ENCODE measurements at regions of chr5 and their contacts with region 1.

Region 1: DNA sequence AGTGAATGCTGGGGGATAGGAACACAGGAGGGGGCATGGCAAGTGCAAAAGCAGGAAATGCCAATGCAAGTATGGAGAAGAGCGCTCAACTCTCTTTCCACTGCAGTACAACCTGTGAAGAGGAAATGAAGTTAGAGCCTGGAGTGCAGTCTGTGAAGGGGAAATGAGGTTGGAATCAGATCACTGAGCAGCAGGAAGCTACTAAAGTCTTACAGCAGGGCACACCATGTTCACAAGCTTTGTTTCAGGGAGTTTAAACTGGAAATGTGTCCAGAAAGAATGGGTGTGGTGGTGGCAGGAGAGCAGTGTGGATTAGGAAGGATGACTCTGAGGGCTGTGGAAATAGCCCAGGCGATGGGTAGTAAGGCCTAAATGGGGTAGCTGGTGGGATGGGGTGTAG is 15.4 kb downstream of the ARHGEF37 start:
- DNase-seq: peak; percentile 75
- H3K4me3 ChIP-seq: no peak overlapping the region
- H3K27ac ChIP-seq: peak overlapping the region; percentile 46
- H3K4me1 ChIP-seq: peaks cover 7% of the 10 kb centered on the region
- H3K27me3 ChIP-seq: peaks cover 0 to 1% of the 10 kb centered on the region in 2 experiments
- CTCF ChIP-seq: no peak
- POLR2A ChIP-seq: no peak

Region 2: DNA sequence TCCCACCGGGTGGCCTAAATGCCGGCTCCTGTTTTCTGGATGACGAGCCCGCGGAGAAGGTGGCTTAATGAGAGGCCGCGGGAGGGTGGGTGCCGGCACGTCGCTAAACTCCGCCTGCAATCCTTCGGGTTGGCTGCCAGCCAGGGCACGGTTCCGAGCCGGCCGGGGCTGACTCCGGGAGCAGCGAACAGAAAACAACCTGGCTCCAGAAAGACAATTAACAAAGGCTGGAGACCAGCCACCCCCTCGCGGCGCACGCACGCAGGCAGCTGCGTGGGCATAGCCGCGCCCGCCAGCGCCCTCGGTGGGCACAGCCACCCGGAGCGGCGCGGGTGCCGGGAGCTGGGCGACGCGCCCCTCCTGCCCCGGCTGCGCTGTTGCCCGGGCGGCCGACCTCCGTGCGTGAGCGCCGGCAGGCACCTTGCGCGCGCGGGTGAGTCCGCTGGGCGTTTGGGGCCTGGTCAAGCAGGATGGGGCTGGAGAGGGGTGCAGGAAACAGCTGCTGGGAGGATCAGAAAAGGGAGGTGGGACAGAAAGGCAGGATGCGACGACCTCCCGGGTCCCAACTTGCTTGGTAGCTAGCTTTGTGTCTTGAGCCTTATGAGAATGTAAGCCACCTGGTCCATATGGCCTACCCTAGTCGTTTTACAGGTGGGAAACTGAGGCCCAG is 15.4 kb before region 1 on chr5 and contains the start of gene ARHGEF37:
- CTCF ChIA-PET with region 1: interaction called, 9 read pairs
- POLR2A ChIA-PET with region 1: interaction called, 7 read pairs
- dilution Hi-C with region 1: no loop called
- intact Hi-C with region 1: loop called (anchors 1 kb)
- DNase-seq: peak; percentile 93
- H3K4me3 ChIP-seq: peak within 1 kb of the TSS; percentile 14 to 54 (median 34)
- H3K27ac ChIP-seq: peak within 1 kb of the TSS; percentile 83
- H3K4me1 ChIP-seq: peaks cover 29% of the 10 kb centered on the region
- H3K27me3 ChIP-seq: no peaks in the 10 kb centered on the region
- CTCF ChIP-seq: no peak
- POLR2A ChIP-seq: peak; percentile 31
- total RNA-seq, gene ARHGEF37: 7.0 and 7.1 TPM in 2 replicates

Region 3: GRCh38 chr5:149820536-149821510 is 224.1 kb after region 1 on chr5:
- CTCF ChIA-PET with region 1: no interaction called
- POLR2A ChIA-PET with region 1: no interaction called
- dilution Hi-C with region 1: no loop called
- intact Hi-C with region 1: no loop called
- DNase-seq: no peak
- H3K4me3 ChIP-seq: no peak overlapping the region
- H3K27ac ChIP-seq: no peak overlapping the region
- H3K4me1 ChIP-seq: no peaks in the 10 kb centered on the region
- H3K27me3 ChIP-seq: no peaks in the 10 kb centered on the region
- CTCF ChIP-seq: no peak
- POLR2A ChIP-seq: no peak

Measured in endothelial cell of umbilical vein (primary cell).